Activated CD4-positive, alpha-beta T cell treated with anti-CD3 and anti-CD28 coated beads, Interleukin-2, amount 10 ng/mL, durations not matched to agents 7 days and 5 days (primary cell): ENCODE measurements at regions of chr10 and their contacts with region 1.

Region 1: GRCh38 chr10:118568327-118568848 is 27.1 kb downstream of the PRLHR start:
- DNase-seq: peak; percentile 78
- H3K4me3 Mint-ChIP-seq: no peak overlapping the region
- H3K27ac Mint-ChIP-seq: no peak overlapping the region
- H3K4me1 Mint-ChIP-seq: peaks cover 8% of the 10 kb centered on the region
- H3K27me3 Mint-ChIP-seq: peaks cover 5% of the 10 kb centered on the region

Region 2: DNA sequence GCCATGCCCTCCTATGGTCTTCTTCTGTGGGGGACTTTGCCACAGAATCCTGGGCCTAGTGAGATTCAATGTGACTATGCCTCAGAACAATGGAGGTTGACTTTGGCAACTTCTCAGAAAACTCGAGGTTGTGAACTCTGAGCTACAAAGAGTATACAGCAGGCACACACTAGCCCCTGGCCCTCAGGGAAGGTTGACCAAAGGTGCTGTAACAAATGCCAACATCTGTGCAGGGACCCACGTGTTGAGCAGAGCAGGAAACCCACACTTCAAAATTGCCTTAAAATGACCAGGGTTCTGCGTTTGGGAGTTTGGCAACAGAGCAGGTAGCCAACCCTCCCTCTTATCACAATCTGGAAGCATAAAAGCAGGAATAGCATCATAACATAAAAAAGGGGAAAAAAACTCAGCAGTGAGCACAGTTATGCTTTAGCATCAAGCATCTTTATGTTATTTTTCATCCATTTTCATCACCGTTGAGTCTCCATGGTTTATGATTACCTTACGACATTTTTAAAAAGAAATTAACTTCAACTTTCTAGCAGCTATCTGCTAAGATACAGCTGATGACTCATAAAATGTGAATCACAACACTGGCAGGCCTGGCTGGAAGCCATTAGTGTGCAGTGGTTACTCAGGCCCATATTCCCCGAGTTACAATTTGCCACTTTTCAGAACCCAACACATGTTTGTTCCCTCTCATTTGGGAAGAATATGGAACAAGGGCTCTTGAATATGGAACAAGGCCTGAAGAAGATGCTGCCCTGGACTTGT is 16.0 kb after region 1 on chr10:
- CTCF ChIA-PET with region 1: interaction called, 12 read pairs
- POLR2A ChIA-PET with region 1: no interaction called
- DNase-seq: no peak
- H3K4me3 Mint-ChIP-seq: no peak overlapping the region
- H3K27ac Mint-ChIP-seq: no peak overlapping the region
- H3K4me1 Mint-ChIP-seq: no peaks in the 10 kb centered on the region
- H3K27me3 Mint-ChIP-seq: no peaks in the 10 kb centered on the region